ENCODE measurements at regions of chrX and their contacts with region 1.

Region 1: GRCh38 chrX:103254921-103255493 is at the start of gene TCEAL8:
- DNase-seq: peak; percentile 68
- ATAC-seq: peak; percentile 88
- H3K4me3 ChIP-seq: peak within 1 kb of the TSS; percentile 60 to 73 (median 72)
- H3K4me3 Mint-ChIP-seq: peak within 1 kb of the TSS; percentile 95
- H3K27ac ChIP-seq: peak within 1 kb of the TSS; percentile 43 to 61
- H3K27ac Mint-ChIP-seq: peak within 1 kb of the TSS; percentile 83
- H3K4me1 ChIP-seq: peaks cover 3 to 14% of the 10 kb centered on the region in 2 donors
- H3K4me1 Mint-ChIP-seq: peaks cover 18% of the 10 kb centered on the region
- H3K27me3 ChIP-seq: no peaks in the 10 kb centered on the region
- H3K27me3 Mint-ChIP-seq: no peaks in the 10 kb centered on the region
- CTCF ChIP-seq: no peak
- total RNA-seq, gene TCEAL8: 14.4 and 17.5 TPM in 2 replicates

Region 2: GRCh38 chrX:103310542-103311398 is 55.8 kb after region 1 on chrX and contains the start of gene BEX2:
- CTCF ChIA-PET with region 1: no interaction called
- POLR2A ChIA-PET with region 1: no interaction called
- intact Hi-C with region 1: loop called (anchors 2 kb)
- DNase-seq: peak; percentile 88
- ATAC-seq: peak; percentile 98
- H3K4me3 ChIP-seq: peak within 1 kb of the TSS in 4 of 5 experiments; percentile 57 to 71 (median 64)
- H3K4me3 Mint-ChIP-seq: peak within 1 kb of the TSS; percentile 85
- H3K27ac ChIP-seq: peak within 1 kb of the TSS; percentile 55 to 79
- H3K27ac Mint-ChIP-seq: peak within 1 kb of the TSS; percentile 78
- H3K4me1 ChIP-seq: peaks cover 4 to 10% of the 10 kb centered on the region in 2 donors
- H3K4me1 Mint-ChIP-seq: peaks cover 2% of the 10 kb centered on the region
- H3K27me3 ChIP-seq: no peaks in the 10 kb centered on the region
- H3K27me3 Mint-ChIP-seq: no peaks in the 10 kb centered on the region
- CTCF ChIP-seq: no peak
- total RNA-seq, gene BEX2: 15.9 and 17.9 TPM in 2 replicates